ENCODE measurements at regions of chr3 and their contacts with region 1.

Region 1: DNA sequence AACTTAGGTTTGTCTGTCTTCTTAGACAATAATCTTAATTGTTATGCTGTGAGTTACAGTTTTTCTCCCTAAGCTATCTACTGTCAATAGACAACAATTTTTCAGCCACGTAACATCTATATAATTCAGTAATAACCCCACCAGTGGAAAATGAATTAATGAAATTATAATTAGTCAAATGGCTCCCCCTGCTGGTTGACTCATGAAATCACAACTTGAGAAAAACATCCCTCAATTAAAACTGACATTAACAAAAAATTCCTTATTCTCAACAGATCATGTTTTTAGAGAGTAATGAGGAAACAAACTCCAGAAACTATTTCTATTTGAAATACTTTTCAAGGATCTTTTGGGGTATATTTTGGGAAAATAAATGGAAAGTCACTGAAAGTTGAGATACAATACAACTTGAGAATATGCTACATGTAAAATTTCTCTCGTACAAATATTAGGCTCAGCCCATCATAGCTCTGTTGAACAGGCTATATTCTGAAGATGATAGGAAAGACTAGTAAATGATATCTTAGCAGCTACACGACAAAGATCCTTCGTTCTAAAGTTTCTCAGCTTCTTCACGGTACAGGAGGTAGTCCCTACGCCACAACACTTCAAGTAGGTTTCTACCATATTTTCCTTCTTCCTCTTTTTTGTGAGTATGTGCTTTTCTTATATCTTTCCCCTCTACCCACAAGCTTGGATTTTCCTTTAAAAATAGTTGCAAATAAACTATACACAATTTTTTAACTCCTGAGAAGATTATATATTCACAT is 20.7 kb downstream of the PPP1R2 start:
- DNase-seq: no peak
- H3K4me3 ChIP-seq: no peak overlapping the region
- CTCF ChIP-seq: peak; percentile 4

Region 2: DNA sequence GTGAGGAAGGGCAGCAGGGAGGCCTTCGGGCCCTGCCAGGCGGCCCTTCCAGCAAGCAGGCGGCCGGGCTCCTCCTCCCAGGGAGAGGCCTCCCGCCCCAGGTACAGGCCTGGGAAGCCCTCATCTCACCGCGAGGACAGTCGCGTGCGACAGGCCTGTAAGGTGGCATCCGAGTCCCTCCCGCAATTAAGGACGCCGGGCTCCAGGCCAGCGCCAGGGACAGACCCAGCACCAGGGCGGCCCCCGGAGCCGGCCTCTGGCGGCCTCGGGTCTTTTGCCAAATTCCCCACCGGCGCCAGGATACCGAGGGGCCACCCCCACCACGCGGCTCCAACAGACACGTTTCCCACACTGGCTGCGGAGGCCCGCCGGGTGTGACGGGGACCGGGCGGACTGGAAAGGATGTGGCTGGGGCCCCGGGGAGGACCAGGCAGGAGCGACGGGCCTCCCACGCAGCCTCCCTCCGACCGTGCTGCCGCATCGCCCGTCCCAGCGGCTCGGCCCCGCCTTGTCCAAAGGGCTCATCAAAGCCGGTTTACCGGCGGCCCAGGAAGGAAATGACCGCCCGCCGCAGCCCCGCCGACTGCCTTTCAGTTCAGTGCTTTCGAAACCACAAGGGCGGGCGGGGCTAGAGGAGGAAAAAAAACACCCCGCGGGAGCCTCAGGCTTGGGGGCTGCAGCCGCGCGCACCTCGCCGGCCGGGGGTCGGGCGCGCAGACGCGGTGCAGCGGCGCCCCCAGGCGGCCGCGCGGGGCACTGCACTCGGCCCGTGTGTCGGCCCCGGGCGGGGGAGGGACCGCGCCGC is 262.8 kb before region 1 on chr3:
- CTCF ChIA-PET with region 1: interaction called, 37 read pairs
- POLR2A ChIA-PET with region 1: no interaction called
- DNase-seq: no peak
- H3K4me3 ChIP-seq: peak overlapping the region; percentile 75
- CTCF ChIP-seq: peak; percentile 45

Region 3: DNA sequence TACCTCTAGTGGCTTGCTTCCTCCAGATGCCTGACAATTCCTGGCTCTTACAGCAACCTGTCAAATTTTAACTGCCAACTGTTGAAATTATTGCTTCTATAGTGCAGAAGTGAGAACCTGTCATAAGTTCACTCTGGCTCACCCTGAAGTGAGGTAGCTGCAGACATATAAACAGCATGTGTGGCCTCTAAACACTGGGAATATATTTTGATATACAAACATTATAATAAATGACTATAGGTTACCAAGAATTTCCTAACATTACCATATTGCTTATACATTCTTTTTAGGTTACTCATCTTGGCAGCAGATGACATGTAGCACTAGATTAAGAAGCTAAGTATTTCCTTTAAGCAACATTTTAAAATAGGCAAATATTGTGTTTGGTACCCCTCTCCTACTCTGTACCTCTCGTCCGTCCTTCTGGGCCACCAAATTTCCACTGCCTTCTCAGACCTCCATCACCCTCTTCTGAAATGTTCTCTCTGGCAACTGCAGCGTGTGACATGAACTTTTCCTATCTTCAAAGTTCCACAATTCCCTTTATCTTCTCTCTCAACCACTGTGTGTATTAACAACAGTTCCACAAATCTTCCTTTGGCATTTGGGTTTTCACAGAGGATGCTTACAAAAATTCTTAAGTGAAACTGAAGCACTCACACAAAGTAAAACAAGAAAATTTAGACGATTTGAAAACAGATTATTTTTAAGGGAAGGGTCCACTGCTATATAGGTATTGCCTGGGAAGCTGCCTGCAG is 236.1 kb before region 1 on chr3:
- CTCF ChIA-PET with region 1: interaction called, 14 read pairs
- POLR2A ChIA-PET with region 1: no interaction called
- DNase-seq: no peak
- H3K4me3 ChIP-seq: no peak overlapping the region
- CTCF ChIP-seq: no peak

Region 4: GRCh38 chr3:195508185-195508584 is 14.3 kb before region 1 on chr3:
- CTCF ChIA-PET with region 1: interaction called, 18 read pairs
- POLR2A ChIA-PET with region 1: no interaction called
- DNase-seq: no peak
- H3K4me3 ChIP-seq: no peak overlapping the region
- CTCF ChIP-seq: no peak

Region 5: GRCh38 chr3:195542698-195543499 is 20.5 kb after region 1 on chr3 and contains the start of gene PPP1R2:
- CTCF ChIA-PET with region 1: interaction called, 68 read pairs
- POLR2A ChIA-PET with region 1: interaction called, 3 read pairs
- DNase-seq: peak; percentile 31
- H3K4me3 ChIP-seq: peak within 1 kb of the TSS; percentile 94
- CTCF ChIP-seq: no peak